CD8-positive, alpha-beta T cell (primary cell): ENCODE measurements at regions of chr19 and their contacts with region 1.

Region 1: DNA sequence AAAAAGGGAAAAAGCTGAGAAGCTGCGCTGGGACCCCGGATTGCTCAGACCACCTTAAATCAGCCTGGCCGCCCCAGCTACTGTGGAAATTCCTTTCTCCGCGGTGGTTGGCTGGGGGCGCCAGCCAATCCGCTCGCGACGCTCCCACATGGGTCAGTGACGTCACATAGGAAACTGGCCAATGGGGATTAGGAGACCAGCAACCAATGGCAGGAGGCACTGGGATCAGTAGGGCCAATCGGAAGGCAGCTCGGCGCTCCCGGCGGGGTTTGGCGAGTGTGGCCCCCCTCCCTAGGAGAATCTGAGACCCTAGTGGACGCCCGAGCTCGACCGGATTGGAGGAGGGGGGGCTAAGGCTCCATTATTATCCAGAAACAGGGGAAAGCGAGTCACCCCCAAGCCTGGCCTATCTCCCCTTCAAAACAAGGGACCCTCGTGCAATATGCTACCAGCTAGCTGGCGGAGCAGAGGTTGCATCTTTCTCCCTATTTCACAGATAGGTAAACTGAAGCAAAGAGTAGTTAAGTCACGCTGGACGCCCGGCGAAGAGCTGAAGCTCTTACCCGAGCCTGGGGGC is 6.5 kb upstream of the TLE2 start:
- DNase-seq: peak; percentile 89 to 99 (median 94)
- ATAC-seq: peak; percentile 87
- H3K4me3 ChIP-seq: peak overlapping the region; percentile 63 to 80
- H3K4me3 Mint-ChIP-seq: peak overlapping the region; percentile 93
- H3K27ac ChIP-seq: peak overlapping the region; percentile 47 to 79
- H3K27ac Mint-ChIP-seq: peak overlapping the region; percentile 96
- H3K4me1 ChIP-seq: peaks cover 18% of the 10 kb centered on the region
- H3K4me1 Mint-ChIP-seq: peaks cover 19% of the 10 kb centered on the region
- H3K27me3 ChIP-seq: no peaks in the 10 kb centered on the region
- H3K27me3 Mint-ChIP-seq: no peaks in the 10 kb centered on the region
- CTCF ChIP-seq: no peak

Region 2: GRCh38 chr19:2239771-2240770 is 795.6 kb before region 1 on chr19:
- CTCF ChIA-PET with region 1: no interaction called
- POLR2A ChIA-PET with region 1: no interaction called
- intact Hi-C with region 1: no loop called
- DNase-seq: peak in 7 of 9 experiments; percentile 21 to 82 (median 51)
- ATAC-seq: no peak
- H3K4me3 ChIP-seq: peak overlapping the region; percentile 57 to 68
- H3K4me3 Mint-ChIP-seq: peak overlapping the region; percentile 77
- H3K27ac ChIP-seq: peak overlapping the region; percentile 43 to 99
- H3K27ac Mint-ChIP-seq: peak overlapping the region; percentile 84
- H3K4me1 ChIP-seq: peaks cover 67% of the 10 kb centered on the region
- H3K4me1 Mint-ChIP-seq: peaks cover 62% of the 10 kb centered on the region
- H3K27me3 ChIP-seq: no peaks in the 10 kb centered on the region
- H3K27me3 Mint-ChIP-seq: no peaks in the 10 kb centered on the region
- CTCF ChIP-seq: no peak

Region 3: DNA sequence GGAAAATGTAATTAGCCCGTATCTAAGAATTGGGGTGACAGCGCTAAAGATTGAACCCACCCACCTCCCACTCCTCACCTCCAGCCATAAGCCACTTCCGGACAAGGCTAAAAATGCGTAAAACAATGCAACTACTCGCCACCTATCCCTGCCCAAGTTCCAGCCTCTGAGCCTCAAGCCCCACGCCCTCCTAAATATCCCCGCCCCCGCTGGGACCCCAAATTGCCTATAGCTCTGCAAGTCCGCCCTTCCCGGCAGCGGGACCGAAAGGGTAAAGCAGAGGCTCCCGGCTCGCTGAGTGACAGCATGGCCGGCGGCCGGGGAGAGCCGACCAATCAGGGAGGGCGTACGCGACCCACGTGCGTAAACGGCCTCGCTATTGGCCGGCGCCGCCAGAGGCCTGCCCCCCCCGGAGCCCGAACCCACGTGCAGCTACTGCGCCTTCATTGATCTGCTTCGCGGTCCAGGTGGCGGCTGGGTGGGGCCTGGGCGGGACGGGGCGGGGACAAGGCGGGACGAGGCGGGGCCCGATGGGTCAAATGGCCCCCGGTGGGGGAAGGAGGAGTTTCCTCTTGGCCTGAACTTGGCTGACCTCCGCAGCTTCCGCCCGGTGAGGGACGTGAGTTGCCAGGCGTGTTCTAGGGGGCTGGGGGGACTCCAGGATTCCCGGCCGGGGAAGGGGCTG is 58.5 kb before region 1 on chr19 and contains the start of gene TLE6:
- CTCF ChIA-PET with region 1: interaction called, 3 read pairs
- POLR2A ChIA-PET with region 1: interaction called, 11 read pairs
- intact Hi-C with region 1: loop called (anchors 1 kb)
- DNase-seq: peak; percentile 87 to 96 (median 93)
- ATAC-seq: peak; percentile 99
- H3K4me3 ChIP-seq: peak within 1 kb of the TSS; percentile 67 to 84
- H3K4me3 Mint-ChIP-seq: peak within 1 kb of the TSS; percentile 93
- H3K27ac ChIP-seq: no peak within 1 kb of the TSS
- H3K27ac Mint-ChIP-seq: peak within 1 kb of the TSS; percentile 52
- H3K4me1 ChIP-seq: peaks cover 12% of the 10 kb centered on the region
- H3K4me1 Mint-ChIP-seq: peaks cover 16% of the 10 kb centered on the region
- H3K27me3 ChIP-seq: no peaks in the 10 kb centered on the region
- H3K27me3 Mint-ChIP-seq: peaks cover 6% of the 10 kb centered on the region
- CTCF ChIP-seq: no peak
- total RNA-seq, gene TLE6: not detected

Region 4: DNA sequence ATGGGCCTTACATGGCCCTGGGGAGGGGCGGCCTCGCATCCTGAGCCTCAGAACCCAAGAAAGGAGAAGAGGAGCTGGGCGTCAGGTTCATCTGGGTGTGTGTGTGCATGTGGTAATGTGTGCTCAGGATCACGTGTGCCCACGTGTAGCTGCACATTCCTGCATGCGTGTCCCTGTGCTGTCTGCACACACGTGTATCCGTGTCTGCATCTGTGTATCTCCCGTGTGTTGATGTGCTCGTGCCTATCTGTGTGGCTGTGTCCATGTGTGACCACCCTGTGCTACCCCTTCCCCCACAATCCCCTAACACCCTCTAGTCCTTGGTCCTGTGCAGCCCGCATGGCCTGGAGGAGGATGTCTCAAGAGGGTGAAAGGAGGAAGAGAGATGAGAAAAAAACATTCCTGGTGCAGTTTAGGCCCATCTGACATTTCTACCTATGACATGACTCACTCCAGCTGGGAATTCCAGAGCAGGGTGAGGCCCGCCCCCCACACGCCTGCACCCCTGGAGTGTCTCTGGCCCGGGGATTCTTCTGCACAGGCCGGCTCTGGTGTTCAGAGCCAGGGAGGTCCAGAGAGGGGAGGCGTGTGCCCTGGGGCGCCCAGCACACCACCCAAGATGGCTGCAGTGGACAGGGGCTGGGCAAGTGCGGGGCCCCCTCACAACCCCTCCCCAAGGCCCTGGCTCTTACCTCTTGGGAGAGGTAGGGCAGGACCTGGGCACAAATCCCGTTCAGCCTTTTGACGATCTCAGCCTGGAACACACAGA is 19.5 kb after region 1 on chr19:
- CTCF ChIA-PET with region 1: interaction called, 15 read pairs
- POLR2A ChIA-PET with region 1: interaction called, 104 read pairs
- intact Hi-C with region 1: no loop called
- DNase-seq: no peak
- ATAC-seq: no peak
- H3K4me3 ChIP-seq: no peak overlapping the region
- H3K4me3 Mint-ChIP-seq: peak overlapping the region; percentile 42
- H3K27ac ChIP-seq: no peak overlapping the region
- H3K27ac Mint-ChIP-seq: peak overlapping the region; percentile 77
- H3K4me1 ChIP-seq: peaks cover 75% of the 10 kb centered on the region
- H3K4me1 Mint-ChIP-seq: peaks cover 55% of the 10 kb centered on the region
- H3K27me3 ChIP-seq: no peaks in the 10 kb centered on the region
- H3K27me3 Mint-ChIP-seq: no peaks in the 10 kb centered on the region
- CTCF ChIP-seq: no peak

Region 5: GRCh38 chr19:3075895-3076431 is 40.3 kb after region 1 on chr19:
- CTCF ChIA-PET with region 1: interaction called, 21 read pairs
- POLR2A ChIA-PET with region 1: no interaction called
- intact Hi-C with region 1: no loop called
- DNase-seq: peak; percentile 58 to 89 (median 79)
- ATAC-seq: peak; percentile 100
- H3K4me3 ChIP-seq: no peak overlapping the region
- H3K4me3 Mint-ChIP-seq: no peak overlapping the region
- H3K27ac ChIP-seq: no peak overlapping the region
- H3K27ac Mint-ChIP-seq: no peak overlapping the region
- H3K4me1 ChIP-seq: peaks cover 10% of the 10 kb centered on the region
- H3K4me1 Mint-ChIP-seq: peaks cover 2% of the 10 kb centered on the region
- H3K27me3 ChIP-seq: no peaks in the 10 kb centered on the region
- H3K27me3 Mint-ChIP-seq: no peaks in the 10 kb centered on the region
- CTCF ChIP-seq: peak; percentile 85

Region 6: GRCh38 chr19:3094601-3095437 is 59.2 kb after region 1 on chr19:
- CTCF ChIA-PET with region 1: no interaction called
- POLR2A ChIA-PET with region 1: no interaction called
- intact Hi-C with region 1: loop called in 1 of 2 experiments (anchors 5 kb)
- DNase-seq: peak in 4 of 9 experiments; percentile 43 to 59 (median 58)
- ATAC-seq: peak; percentile 6
- H3K4me3 ChIP-seq: peak overlapping the region; percentile 34 to 62
- H3K4me3 Mint-ChIP-seq: peak overlapping the region; percentile 77
- H3K27ac ChIP-seq: no peak overlapping the region
- H3K27ac Mint-ChIP-seq: peak overlapping the region; percentile 60
- H3K4me1 ChIP-seq: peaks cover 42% of the 10 kb centered on the region
- H3K4me1 Mint-ChIP-seq: peaks cover 24% of the 10 kb centered on the region
- H3K27me3 ChIP-seq: peaks cover 0 to 20% of the 10 kb centered on the region in 2 experiments
- H3K27me3 Mint-ChIP-seq: peaks cover 6% of the 10 kb centered on the region
- CTCF ChIP-seq: no peak

Region 7: GRCh38 chr19:3176603-3177501 is 141.2 kb after region 1 on chr19:
- CTCF ChIA-PET with region 1: no interaction called
- POLR2A ChIA-PET with region 1: interaction called, 3 read pairs
- intact Hi-C with region 1: loop called in 1 of 2 experiments (anchors 2 kb)
- DNase-seq: peak; percentile 43 to 86 (median 82)
- ATAC-seq: peak; percentile 68
- H3K4me3 ChIP-seq: peak overlapping the region; percentile 45 to 66
- H3K4me3 Mint-ChIP-seq: peak overlapping the region; percentile 62
- H3K27ac ChIP-seq: peak overlapping the region; percentile 62 to 90
- H3K27ac Mint-ChIP-seq: peak overlapping the region; percentile 98
- H3K4me1 ChIP-seq: peaks cover 26% of the 10 kb centered on the region
- H3K4me1 Mint-ChIP-seq: peaks cover 26% of the 10 kb centered on the region
- H3K27me3 ChIP-seq: no peaks in the 10 kb centered on the region
- H3K27me3 Mint-ChIP-seq: no peaks in the 10 kb centered on the region
- CTCF ChIP-seq: no peak

Region 8: GRCh38 chr19:3275583-3276340 is 240.1 kb after region 1 on chr19:
- CTCF ChIA-PET with region 1: no interaction called
- POLR2A ChIA-PET with region 1: no interaction called
- intact Hi-C with region 1: loop called in 1 of 2 experiments (anchors 1 kb)
- DNase-seq: peak; percentile 84 to 98 (median 93)
- ATAC-seq: peak; percentile 79
- H3K4me3 ChIP-seq: peak overlapping the region; percentile 59 to 84
- H3K4me3 Mint-ChIP-seq: peak overlapping the region; percentile 86
- H3K27ac ChIP-seq: peak overlapping the region; percentile 34 to 63
- H3K27ac Mint-ChIP-seq: peak overlapping the region; percentile 70
- H3K4me1 ChIP-seq: peaks cover 18% of the 10 kb centered on the region
- H3K4me1 Mint-ChIP-seq: peaks cover 17% of the 10 kb centered on the region
- H3K27me3 ChIP-seq: peaks cover 0 to 2% of the 10 kb centered on the region in 2 experiments
- H3K27me3 Mint-ChIP-seq: peaks cover 6% of the 10 kb centered on the region
- CTCF ChIP-seq: peak; percentile 14